Naive thymus-derived CD8-positive, alpha-beta T cell (primary cell): ENCODE measurements at regions of chr6 and their contacts with region 1.

Region 1: DNA sequence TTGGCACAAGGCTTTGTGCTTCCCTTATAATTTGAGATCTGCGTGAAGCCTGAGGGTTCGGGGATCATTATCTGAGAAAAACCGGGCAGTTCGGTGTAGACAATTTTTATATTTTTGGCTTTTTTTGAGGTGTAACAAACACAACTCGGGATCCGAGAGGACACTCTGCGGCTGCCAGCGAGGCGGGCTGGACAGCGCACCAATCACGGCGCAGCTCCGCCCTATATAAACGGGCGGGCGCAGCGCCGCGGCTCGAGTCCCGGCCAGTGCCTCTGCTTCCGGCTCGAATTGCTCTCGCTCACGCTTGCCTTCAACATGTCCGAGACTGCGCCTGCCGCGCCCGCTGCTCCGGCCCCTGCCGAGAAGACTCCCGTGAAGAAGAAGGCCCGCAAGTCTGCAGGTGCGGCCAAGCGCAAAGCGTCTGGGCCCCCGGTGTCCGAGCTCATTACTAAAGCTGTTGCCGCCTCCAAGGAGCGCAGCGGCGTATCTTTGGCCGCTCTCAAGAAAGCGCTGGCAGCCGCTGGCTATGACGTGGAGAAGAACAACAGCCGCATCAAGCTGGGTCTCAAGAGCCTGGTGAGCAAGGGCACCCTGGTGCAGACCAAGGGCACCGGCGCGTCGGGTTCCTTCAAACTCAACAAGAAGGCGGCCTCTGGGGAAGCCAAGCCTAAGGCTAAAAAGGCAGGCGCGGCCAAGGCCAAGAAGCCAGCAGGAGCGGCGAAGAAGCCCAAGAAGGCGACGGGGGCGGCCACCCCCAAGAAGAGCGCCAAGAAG is 69.0 kb downstream of the HFE start:
- DNase-seq: peak; percentile 73 to 96 (median 88)
- ATAC-seq: peak; percentile 48 to 58
- H3K4me3 Mint-ChIP-seq: peak overlapping the region; percentile 89 to 99 (median 96)
- H3K27ac Mint-ChIP-seq: peak overlapping the region; percentile 92 to 100 (median 98)
- H3K4me1 Mint-ChIP-seq: peaks cover 24 to 44% (median 39%) of the 10 kb centered on the region in 4 donors
- H3K27me3 Mint-ChIP-seq: no peaks in the 10 kb centered on the region

Region 2: DNA sequence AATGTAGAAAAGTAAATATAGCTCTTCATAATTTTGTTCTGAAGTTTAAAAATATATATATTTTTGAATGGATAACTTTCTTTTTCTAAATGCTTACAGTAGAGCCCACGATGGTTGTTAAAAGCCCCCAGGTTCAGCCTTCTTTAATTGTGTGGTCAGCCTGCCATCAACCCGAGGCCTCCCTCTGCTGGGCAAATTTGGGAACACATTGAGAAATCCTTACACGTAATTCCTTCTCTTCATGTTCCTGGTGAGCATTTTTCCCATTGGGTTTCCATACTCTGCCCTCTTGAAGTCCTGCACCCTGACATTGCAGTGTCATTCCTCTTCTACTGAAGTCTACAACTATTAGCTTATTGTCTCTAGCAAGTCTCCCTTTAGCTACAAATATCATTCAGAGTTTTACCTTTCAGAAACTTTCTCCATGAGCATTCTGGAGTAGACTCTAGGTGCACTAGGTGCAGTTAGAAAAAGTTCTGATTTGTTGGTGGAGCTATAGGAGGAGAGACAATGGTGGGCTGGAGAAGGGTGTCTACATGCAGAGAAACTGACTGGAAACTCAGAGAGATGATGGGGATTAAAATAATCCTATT is 153.1 kb before region 1 on chr6:
- POLR2A ChIA-PET with region 1: no interaction called
- DNase-seq: peak; percentile 15 to 72 (median 42)
- ATAC-seq: peak; percentile 54 to 58
- H3K4me3 Mint-ChIP-seq: no peak overlapping the region
- H3K27ac Mint-ChIP-seq: no peak overlapping the region
- H3K4me1 Mint-ChIP-seq: peaks cover 0 to 8% (median 4%) of the 10 kb centered on the region in 4 donors
- H3K27me3 Mint-ChIP-seq: no peaks in the 10 kb centered on the region

Region 3: DNA sequence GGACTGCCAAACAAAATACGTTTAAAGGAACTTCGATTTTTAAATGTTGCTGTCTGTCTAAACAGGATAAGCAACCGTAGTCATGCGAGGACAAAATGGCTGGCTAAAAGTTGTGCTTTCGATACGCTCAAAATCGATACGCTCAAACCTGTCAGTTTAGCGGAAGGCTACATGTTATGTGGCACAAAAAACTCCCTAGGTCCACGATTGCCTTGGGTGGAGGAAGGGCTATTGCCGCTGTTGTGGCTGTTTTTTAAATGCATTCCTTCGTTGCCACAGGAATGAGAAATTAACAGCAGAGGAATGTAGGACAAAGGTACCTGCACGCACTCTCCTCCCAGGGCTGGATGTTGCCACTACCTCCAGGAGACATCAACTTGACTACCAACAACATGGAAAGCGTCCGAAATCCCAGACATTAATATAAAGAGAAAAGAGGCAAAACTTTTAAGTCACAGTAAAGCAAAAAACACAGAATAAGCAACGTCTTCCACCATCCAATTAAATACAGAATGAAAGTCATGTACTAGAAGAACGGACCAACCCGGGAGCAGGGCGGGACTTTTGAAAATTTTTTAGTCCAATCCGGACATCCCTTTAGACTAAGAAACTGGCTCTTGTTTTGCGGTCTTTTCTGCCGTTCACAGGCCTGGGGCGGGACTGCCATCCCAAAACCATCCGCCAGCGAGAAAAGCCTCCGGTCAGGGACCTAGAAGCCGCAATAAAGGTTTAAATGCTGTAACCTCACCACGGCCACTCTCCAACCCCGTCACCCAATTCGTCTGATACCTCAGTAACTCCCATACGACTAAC is 101.2 kb before region 1 on chr6:
- POLR2A ChIA-PET with region 1: interaction called, 111 read pairs
- DNase-seq: peak; percentile 63 to 95 (median 87)
- ATAC-seq: peak; percentile 65 to 70
- H3K4me3 Mint-ChIP-seq: peak overlapping the region; percentile 93 to 99 (median 96)
- H3K27ac Mint-ChIP-seq: peak overlapping the region; percentile 93 to 99 (median 99)
- H3K4me1 Mint-ChIP-seq: peaks cover 9 to 34% (median 21%) of the 10 kb centered on the region in 4 donors
- H3K27me3 Mint-ChIP-seq: no peaks in the 10 kb centered on the region

Region 4: DNA sequence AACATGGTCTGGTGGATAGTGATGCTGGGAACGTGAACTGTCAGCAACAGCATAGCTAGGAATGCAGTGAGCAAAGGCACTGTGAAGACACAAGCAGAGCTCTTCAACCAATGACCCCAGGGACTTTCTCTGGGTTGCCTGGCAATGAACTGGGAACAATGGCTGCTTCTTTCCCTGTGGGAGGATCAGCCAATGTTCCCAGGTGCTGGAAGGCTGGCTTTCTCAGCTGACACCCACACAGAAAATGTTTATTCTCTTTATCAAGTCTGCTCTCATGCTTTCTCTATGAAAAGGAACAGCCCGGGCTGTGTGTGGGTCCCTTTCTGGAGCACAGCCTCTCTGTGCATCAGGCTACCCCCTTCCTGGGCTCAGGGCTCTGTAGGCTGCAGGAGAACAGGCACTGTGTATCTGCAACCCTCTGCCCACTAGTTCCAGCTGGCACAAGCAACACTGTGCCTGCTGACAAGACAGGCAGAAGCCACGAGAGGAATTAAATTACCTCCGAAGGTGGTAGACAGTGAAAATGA is 14.8 kb before region 1 on chr6:
- POLR2A ChIA-PET with region 1: interaction called, 30 read pairs
- DNase-seq: no peak
- ATAC-seq: no peak
- H3K4me3 Mint-ChIP-seq: no peak overlapping the region
- H3K27ac Mint-ChIP-seq: peak overlapping the region in 2 of 10 donors; percentile 4 to 21
- H3K4me1 Mint-ChIP-seq: peaks cover 0 to 8% (median 4%) of the 10 kb centered on the region in 4 donors
- H3K27me3 Mint-ChIP-seq: no peaks in the 10 kb centered on the region

Region 5: GRCh38 chr6:26216356-26216885 is 60.2 kb after region 1 on chr6:
- POLR2A ChIA-PET with region 1: interaction called, 176 read pairs
- DNase-seq: peak; percentile 34 to 95 (median 86)
- ATAC-seq: peak; percentile 81 to 84
- H3K4me3 Mint-ChIP-seq: no peak overlapping the region
- H3K27ac Mint-ChIP-seq: no peak overlapping the region
- H3K4me1 Mint-ChIP-seq: peaks cover 0 to 12% (median 7%) of the 10 kb centered on the region in 4 donors
- H3K27me3 Mint-ChIP-seq: no peaks in the 10 kb centered on the region

Region 6: GRCh38 chr6:26285143-26286134 is 129.2 kb after region 1 on chr6:
- POLR2A ChIA-PET with region 1: interaction called, 54 read pairs
- DNase-seq: peak; percentile 80 to 99 (median 93)
- ATAC-seq: peak; percentile 77 to 87
- H3K4me3 Mint-ChIP-seq: peak overlapping the region; percentile 84 to 96 (median 91)
- H3K27ac Mint-ChIP-seq: peak overlapping the region; percentile 95 to 100 (median 98)
- H3K4me1 Mint-ChIP-seq: peaks cover 19 to 36% (median 29%) of the 10 kb centered on the region in 4 donors
- H3K27me3 Mint-ChIP-seq: peaks cover 0 to 7% (median 0%) of the 10 kb centered on the region in 5 donors

Region 7: GRCh38 chr6:27864906-27865849 is 1708.9 kb after region 1 on chr6:
- POLR2A ChIA-PET with region 1: interaction called, 29 read pairs
- DNase-seq: peak; percentile 43 to 91 (median 80)
- ATAC-seq: peak; percentile 81
- H3K4me3 Mint-ChIP-seq: peak overlapping the region; percentile 87 to 99 (median 98)
- H3K27ac Mint-ChIP-seq: peak overlapping the region; percentile 87 to 99 (median 96)
- H3K4me1 Mint-ChIP-seq: peaks cover 15 to 45% (median 39%) of the 10 kb centered on the region in 4 donors
- H3K27me3 Mint-ChIP-seq: no peaks in the 10 kb centered on the region